KBM-7 (cell line): ENCODE measurements at regions of chr17 and their contacts with region 1.

Region 1: DNA sequence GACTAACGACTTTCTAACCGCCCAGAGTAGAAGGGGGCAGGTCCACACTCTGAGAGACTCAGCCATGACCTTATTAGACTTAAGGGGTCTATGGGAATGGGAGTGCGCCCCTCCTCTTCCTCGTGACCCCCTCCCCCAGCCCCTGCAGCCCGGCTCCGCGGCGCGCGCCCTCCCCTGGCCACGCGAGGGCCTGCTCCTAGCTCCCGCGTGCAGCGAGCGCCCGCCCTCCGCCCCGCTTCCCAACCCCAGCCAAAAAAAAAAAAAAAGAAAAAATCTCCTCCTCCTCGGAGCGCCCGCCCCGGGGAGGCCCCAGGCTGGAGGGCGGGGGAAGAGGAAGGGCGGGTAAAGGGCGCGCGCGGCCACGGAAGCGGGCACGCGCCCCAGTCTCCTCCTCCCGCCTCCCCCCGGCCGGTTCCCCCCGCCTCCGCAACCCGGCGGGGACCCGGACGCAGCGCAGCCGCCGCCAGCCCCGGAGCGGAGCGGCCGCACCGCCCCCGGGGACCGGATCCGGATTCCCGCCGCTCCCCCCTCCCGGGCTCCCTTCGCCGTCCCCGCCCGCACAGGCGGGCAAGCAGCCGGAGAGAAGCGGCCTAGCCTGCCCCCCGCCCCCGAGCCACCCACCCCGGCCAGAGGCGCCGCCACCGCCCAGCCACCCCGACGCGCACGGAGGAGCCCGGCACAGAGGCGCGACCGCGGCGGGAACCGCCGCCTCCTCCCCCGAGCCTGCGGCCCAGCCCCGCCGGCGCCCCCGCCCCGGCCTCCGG is 949 bp downstream of the UBTF start:
- DNase-seq: peak; percentile 96

Region 2: GRCh38 chr17:43832976-43833829 is 385.3 kb before region 1 on chr17 and contains the start of gene MPP3:
- in situ Hi-C with region 1: no loop called
- DNase-seq: peak; percentile 50

Region 3: DNA sequence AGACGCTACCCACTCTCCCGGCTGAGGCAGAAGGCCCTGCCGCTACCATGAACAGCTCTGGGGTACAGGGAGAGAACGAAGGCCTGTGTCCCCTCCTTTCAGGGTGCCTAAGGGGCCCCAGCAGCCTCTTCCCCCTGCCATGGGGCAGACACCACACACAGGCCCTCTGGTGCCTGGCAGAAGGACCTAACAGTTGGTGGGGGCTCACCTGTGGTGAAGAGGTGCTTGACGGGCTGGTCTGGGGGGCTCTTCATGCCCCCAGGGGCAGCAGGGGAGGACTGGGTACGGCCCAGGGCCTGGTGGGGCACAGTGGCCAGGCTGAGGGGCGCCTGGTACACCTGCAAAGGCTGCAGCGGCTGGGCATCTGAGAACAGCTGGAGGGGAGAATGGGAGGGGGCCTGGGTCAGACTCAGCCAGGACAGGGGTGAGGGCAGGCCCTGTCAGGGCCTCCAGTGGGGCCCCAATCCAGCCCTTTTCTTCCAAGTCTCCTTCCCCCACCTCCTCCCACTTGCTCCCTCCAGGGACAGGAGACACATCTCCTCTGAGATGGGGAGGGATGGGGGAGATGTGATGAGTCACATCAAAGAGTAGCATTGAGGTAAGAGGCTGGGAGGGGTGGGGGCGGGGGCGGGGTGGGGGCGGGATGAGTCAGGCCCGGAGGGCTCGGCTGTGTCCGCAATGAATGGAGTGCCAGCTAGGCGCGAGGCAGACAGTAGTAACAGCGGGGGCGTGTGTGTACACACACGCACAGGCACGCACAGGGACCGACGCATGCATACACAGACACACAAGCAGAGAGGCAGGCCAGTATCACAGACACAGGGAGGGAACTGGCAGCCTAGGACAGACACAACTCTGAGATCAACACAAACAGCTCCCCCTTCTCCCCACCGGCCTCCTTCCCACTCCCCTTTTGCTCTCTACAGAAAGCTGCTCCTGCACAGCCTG is 131.9 kb before region 1 on chr17:
- in situ Hi-C with region 1: no loop called
- DNase-seq: peak; percentile 78

Region 4: GRCh38 chr17:44324571-44325275 is 106.2 kb after region 1 on chr17 and contains the start of gene SLC25A39:
- in situ Hi-C with region 1: loop called (anchors 10 kb)
- DNase-seq: peak; percentile 95